Tibial artery (tissue), 4 donors: ENCODE measurements at regions of chr3 and their contacts with region 1.

Region 1: GRCh38 chr3:97264180-97264579 is 449.8 kb downstream of the EPHA6 start:
- DNase-seq: no peak
- H3K4me3 ChIP-seq: no peak overlapping the region
- H3K27ac ChIP-seq: no peak overlapping the region
- H3K4me1 ChIP-seq: no peaks in the 10 kb centered on the region
- H3K27me3 ChIP-seq: no peaks in the 10 kb centered on the region
- CTCF ChIP-seq: no peak

Region 2: GRCh38 chr3:95655363-95655986 is 1608.7 kb before region 1 on chr3:
- intact Hi-C with region 1: loop called (anchors 5 kb)
- DNase-seq: no peak
- H3K4me3 ChIP-seq: no peak overlapping the region
- H3K27ac ChIP-seq: no peak overlapping the region
- H3K4me1 ChIP-seq: no peaks in the 10 kb centered on the region
- H3K27me3 ChIP-seq: no peaks in the 10 kb centered on the region
- CTCF ChIP-seq: no peak

Region 3: DNA sequence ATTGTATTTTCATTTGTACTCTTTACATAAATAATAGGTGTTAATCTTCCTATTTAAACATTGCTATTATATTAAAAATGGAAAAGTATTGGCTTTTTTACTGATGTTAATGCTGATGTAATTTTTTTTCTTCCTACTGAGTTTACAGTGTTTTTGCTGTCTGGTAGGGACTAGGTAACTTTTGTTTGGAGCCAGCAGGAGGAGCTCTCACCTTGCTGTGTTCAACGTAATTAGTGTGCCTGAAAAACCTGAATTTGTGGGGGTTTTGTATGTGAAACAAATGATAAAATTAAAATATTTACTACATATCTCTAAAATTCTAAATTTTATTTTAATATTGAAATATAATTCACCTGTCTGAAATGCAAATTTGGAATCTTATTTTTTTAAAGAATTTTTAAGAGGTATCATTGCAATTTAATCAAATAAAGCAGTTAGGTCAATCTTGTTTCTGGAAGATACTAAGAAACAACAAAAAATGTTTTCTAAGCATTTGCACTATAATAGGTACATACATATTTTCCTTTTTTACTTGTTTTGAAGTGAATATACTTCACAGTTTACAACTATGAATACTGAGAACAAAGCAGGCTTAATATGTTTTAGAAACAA is 400.9 kb before region 1 on chr3:
- intact Hi-C with region 1: no loop called
- DNase-seq: no peak
- H3K4me3 ChIP-seq: no peak overlapping the region
- H3K27ac ChIP-seq: no peak overlapping the region
- H3K4me1 ChIP-seq: no peaks in the 10 kb centered on the region
- H3K27me3 ChIP-seq: no peaks in the 10 kb centered on the region
- CTCF ChIP-seq: peak; percentile 38 to 44